Sigmoid colon (tissue), 7 donors: ENCODE measurements at regions of chr14 and their contacts with region 1.

Region 1: GRCh38 chr14:92106143-92106926 is at the start of gene ATXN3:
- DNase-seq: peak; percentile 99
- H3K4me3 ChIP-seq: peak within 1 kb of the TSS; percentile 78 to 96 (median 88)
- H3K27ac ChIP-seq: peak within 1 kb of the TSS; percentile 96 to 99 (median 97)
- H3K4me1 ChIP-seq: peaks cover 0 to 33% (median 30%) of the 10 kb centered on the region in 4 donors
- H3K27me3 ChIP-seq: no peaks in the 10 kb centered on the region
- CTCF ChIP-seq: peak; percentile 42 to 80 (median 66)
- EP300 ChIP-seq: peak in 1 of 4 donors; percentile 42
- POLR2A ChIP-seq: peak in 1 of 2 donors; percentile 53
- total RNA-seq, gene ATXN3: 30.4 to 48.5 (median 35.4) TPM

Region 2: DNA sequence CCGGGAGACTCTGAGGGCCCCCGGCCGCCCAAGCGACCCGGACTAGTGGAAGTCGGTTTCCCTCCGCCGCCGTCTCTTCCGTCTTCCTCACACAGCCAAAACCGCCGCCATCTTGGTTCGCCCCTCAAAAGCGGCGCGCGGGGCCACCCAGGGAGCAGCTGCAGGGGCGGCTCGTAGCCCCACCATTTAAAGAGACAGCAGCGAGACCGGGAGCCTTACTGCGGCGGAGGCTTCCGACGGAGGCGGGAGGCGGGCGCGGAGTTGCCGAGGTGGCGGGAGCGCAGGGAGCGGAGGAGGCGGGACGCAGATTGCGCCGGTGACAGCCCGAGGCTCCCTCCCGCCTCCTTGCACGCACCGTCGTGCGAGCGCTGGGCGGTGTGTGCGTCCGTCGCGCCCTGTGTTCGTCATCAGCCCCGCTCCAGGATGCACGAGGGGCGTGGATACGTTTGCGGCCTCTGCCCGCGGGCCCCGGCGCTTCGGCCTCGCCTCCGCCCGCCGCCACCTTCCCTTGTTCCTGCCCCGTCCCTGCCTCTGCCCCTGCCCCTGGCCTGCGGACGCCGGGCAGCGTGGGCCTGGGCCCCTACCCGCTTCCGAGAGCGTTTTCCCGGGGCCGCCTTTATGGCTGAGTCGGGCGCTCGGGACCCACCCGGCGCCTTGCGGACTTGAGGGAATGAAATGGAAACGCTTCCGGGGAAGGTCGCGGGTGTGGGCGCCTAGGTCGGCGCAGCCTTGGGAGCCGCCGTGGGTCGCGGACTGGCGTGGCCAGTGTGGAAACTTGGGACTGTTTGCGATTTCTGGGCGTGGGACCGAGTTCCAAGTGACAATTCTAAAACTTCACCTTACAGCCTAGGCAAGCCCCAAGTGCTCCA is 595.9 kb before region 1 on chr14 and contains the start of gene PPP4R3A:
- intact Hi-C with region 1: loop called (anchors 10 kb)
- DNase-seq: peak; percentile 97
- H3K4me3 ChIP-seq: peak within 1 kb of the TSS; percentile 86 to 100 (median 96)
- H3K27ac ChIP-seq: peak within 1 kb of the TSS; percentile 99 to 100 (median 100)
- H3K4me1 ChIP-seq: peaks cover 0 to 36% (median 30%) of the 10 kb centered on the region in 4 donors
- H3K27me3 ChIP-seq: no peaks in the 10 kb centered on the region
- CTCF ChIP-seq: no peak
- EP300 ChIP-seq: peak in 3 of 4 donors; percentile 22 to 59 (median 46)
- POLR2A ChIP-seq: peak; percentile 68 to 82
- total RNA-seq, gene PPP4R3A: 69.6 to 78.9 (median 75.1) TPM

Region 3: GRCh38 chr14:91836119-91836881 is 270.0 kb before region 1 on chr14:
- intact Hi-C with region 1: no loop called
- DNase-seq: peak; percentile 91
- H3K4me3 ChIP-seq: peak overlapping the region; percentile 43 to 76 (median 66)
- H3K27ac ChIP-seq: peak overlapping the region; percentile 68 to 83 (median 80)
- H3K4me1 ChIP-seq: peaks cover 0 to 17% (median 12%) of the 10 kb centered on the region in 4 donors
- H3K27me3 ChIP-seq: peaks cover 0 to 24% (median 0%) of the 10 kb centered on the region in 3 donors
- CTCF ChIP-seq: no peak
- EP300 ChIP-seq: no peak
- POLR2A ChIP-seq: peak in 1 of 2 donors; percentile 19

Region 4: GRCh38 chr14:92039719-92040430 is 66.5 kb before region 1 on chr14 and contains the start of gene TRIP11:
- intact Hi-C with region 1: loop called (anchors 2 kb)
- DNase-seq: peak; percentile 96
- H3K4me3 ChIP-seq: peak within 1 kb of the TSS; percentile 68 to 96 (median 78)
- H3K27ac ChIP-seq: peak within 1 kb of the TSS; percentile 89 to 98 (median 92)
- H3K4me1 ChIP-seq: peaks cover 0 to 45% (median 40%) of the 10 kb centered on the region in 4 donors
- H3K27me3 ChIP-seq: no peaks in the 10 kb centered on the region
- CTCF ChIP-seq: no peak
- EP300 ChIP-seq: peak in 1 of 4 donors; percentile 58
- POLR2A ChIP-seq: peak; percentile 63 to 78
- total RNA-seq, gene TRIP11: 21.3 to 35.5 (median 32.4) TPM

Region 5: GRCh38 chr14:92121670-92122350 is 15.5 kb after region 1 on chr14 and contains the starts of genes CPSF2 and NDUFB1:
- intact Hi-C with region 1: loop called (anchors 2 kb)
- DNase-seq: peak; percentile 88
- H3K4me3 ChIP-seq: peak within 1 kb of the TSS; percentile 73 to 94 (median 86)
- H3K27ac ChIP-seq: peak within 1 kb of the TSS; percentile 91 to 95 (median 93)
- H3K4me1 ChIP-seq: peaks cover 0 to 59% (median 34%) of the 10 kb centered on the region in 4 donors
- H3K27me3 ChIP-seq: no peaks in the 10 kb centered on the region
- CTCF ChIP-seq: peak in 2 of 4 experiments; percentile 22 to 30
- EP300 ChIP-seq: no peak
- POLR2A ChIP-seq: peak; percentile 16 to 55
- total RNA-seq, gene CPSF2: 22.4 to 41.8 (median 27.0) TPM
- total RNA-seq, gene NDUFB1: 374 to 888 (median 561) TPM

Region 6: DNA sequence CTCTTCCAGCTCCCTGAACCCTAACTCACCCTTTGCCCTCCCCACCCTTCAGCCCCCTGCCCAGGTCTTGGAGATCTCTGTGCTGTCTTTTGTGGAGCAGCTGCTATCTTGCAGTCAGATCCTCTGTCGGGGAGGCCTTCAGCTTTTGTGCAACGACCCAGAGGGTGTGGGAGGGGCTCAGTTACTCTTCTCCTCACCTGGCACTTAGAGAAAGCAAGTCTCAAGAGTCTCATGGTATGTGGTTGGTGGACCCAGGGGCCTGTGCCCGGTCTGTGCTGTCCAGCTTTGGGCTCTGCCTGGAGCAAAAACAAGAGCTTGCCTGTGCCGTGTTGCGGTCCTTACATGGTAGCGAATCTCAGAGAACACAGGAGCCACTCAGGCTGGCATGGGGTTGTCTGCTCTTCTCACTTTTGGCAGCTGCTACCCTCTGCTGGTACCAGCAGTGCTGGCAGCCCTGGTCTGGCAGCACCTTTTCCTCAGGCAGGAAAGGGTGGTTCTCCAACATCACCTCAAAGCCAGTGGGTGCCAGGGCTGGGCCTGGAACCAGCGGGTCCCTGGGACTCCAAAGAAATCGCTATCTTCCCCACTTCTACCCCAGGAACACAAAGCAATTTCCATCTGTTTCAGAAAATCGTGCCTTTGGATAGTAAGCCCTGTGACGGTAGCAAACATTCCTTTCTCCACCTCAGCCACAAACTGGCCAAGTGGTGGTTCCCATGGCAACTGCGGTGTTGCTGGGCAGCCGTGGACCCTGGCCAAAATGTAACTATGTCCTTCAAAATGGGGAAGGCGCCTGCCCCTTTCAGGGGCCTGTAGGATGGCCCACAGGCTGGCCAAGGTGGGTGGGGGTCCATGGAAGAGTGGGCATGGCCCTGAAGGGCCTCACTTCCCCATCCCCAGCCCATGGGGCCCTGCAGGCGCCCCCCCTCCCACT is 497.2 kb after region 1 on chr14:
- intact Hi-C with region 1: loop called (anchors 5 kb)
- DNase-seq: peak; percentile 93
- H3K4me3 ChIP-seq: no peak overlapping the region
- H3K27ac ChIP-seq: peak overlapping the region; percentile 83 to 95 (median 88)
- H3K4me1 ChIP-seq: peaks cover 0 to 80% (median 62%) of the 10 kb centered on the region in 4 donors
- H3K27me3 ChIP-seq: no peaks in the 10 kb centered on the region
- CTCF ChIP-seq: peak in 3 of 4 experiments; percentile 9 to 17 (median 11)
- EP300 ChIP-seq: peak in 1 of 4 donors; percentile 38
- POLR2A ChIP-seq: no peak